Activated CD4-positive, alpha-beta T cell treated with anti-CD3 and anti-CD28 coated beads for 36 hours (primary cell): ENCODE measurements at regions of chr17 and their contacts with region 1.

Region 1: DNA sequence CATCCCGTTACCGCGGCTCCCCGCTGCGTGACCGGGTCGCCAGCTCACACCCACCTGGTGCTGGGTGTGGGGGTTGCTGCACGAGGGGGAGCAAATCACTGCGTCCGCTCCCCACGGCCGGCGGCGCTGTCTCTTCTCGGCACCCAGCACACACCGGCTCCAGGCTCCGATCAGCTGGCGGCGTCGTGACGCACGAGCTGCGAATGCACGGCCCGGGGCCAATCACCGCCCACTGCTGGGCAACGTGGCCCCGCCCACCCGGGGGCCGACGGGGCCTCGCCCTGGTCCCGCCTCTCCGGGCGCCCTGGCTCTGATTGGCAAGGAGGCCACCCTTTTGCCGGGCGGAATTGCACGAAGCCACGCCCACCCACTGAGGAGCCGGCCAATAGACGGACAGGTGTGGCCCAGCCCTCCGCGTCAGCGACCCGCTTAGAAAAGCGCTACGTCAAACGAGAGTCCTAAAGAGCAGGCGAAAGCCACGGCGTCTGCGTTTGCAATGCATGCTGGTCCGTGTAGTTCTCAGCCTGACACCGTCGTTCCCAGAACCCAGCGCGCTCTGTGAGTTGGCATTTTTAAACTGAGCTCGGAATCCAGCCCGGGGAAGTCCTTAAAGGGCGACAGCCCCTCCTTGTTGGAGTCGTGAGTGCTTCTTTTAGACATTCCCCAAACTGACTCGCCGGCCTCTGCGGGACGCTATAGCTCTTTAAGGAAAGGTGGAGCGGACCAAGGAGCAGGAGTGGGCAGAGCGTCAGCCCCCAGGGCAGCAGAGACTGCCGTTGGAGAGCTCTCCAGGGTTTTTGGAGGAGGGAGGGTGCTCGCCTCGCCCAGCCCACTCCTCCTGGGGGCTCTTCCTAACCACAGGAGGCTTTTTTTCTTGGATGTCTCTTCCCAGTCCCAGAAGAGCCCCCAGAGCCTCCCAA is 6.2 kb upstream of the TLCD2 start:
- DNase-seq: peak; percentile 100
- ATAC-seq: peak; percentile 89
- H3K4me3 Mint-ChIP-seq: peak overlapping the region; percentile 86
- H3K27ac Mint-ChIP-seq: peak overlapping the region; percentile 97
- H3K4me1 Mint-ChIP-seq: peaks cover 23% of the 10 kb centered on the region
- H3K27me3 Mint-ChIP-seq: peaks cover 4% of the 10 kb centered on the region

Region 2: GRCh38 chr17:996554-997344 is 719.6 kb before region 1 on chr17 and contains the start of gene TIMM22:
- CTCF ChIA-PET with region 1: no interaction called
- POLR2A ChIA-PET with region 1: no interaction called
- intact Hi-C with region 1: loop called in 1 of 2 experiments (anchors 2 kb)
- DNase-seq: peak; percentile 96
- ATAC-seq: peak; percentile 97
- H3K4me3 Mint-ChIP-seq: peak within 1 kb of the TSS; percentile 86
- H3K27ac Mint-ChIP-seq: peak within 1 kb of the TSS; percentile 96
- H3K4me1 Mint-ChIP-seq: peaks cover 20% of the 10 kb centered on the region
- H3K27me3 Mint-ChIP-seq: no peaks in the 10 kb centered on the region
- total RNA-seq, gene TIMM22: 9.4 to 9.8 TPM

Region 3: DNA sequence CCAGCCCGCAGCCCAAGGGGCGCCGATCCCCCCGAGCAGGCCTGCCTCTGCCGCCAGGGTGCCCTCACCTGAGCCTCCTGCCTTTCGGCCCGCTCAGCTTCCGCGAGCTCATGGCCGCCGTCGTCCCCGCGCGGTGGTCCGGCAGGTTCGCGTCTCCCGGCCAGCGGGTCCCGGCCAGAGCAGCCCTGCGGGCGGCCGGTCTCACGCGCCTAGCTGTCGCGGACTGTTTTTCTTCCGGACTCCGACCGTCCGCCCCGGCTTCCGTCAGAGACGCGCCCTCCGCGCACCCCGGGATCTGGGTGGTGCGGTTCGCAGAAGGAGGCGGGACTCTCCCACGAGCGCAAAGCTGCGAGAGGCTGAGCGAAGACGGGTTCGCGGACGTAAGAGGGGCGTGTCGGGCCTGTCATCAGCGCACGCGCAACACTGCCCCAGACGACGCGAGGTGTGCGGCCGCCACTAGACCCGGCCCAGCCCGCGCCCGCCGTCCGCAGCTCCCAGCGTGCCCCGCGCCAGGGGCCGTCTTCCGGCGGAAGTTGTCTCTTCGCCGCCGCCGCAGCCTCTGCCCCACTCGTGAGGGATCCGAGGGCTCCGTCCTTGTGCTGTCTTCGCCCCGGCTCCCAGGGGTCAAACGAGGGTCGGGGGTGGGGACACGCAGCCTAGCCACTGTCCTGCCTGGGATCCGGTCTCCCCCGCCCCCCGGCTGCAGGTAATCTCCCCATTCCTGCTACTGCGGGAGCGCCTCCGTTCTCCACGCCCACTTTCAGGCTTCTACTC is 199.8 kb before region 1 on chr17 and contains the start of gene INPP5K:
- CTCF ChIA-PET with region 1: no interaction called
- POLR2A ChIA-PET with region 1: no interaction called
- intact Hi-C with region 1: loop called in 1 of 2 experiments (anchors 1 kb)
- DNase-seq: peak; percentile 99
- ATAC-seq: peak; percentile 99
- H3K4me3 Mint-ChIP-seq: peak within 1 kb of the TSS; percentile 85
- H3K27ac Mint-ChIP-seq: peak within 1 kb of the TSS; percentile 81
- H3K4me1 Mint-ChIP-seq: peaks cover 28% of the 10 kb centered on the region
- H3K27me3 Mint-ChIP-seq: no peaks in the 10 kb centered on the region
- total RNA-seq, gene INPP5K: 18.5 to 27.3 TPM

Region 4: DNA sequence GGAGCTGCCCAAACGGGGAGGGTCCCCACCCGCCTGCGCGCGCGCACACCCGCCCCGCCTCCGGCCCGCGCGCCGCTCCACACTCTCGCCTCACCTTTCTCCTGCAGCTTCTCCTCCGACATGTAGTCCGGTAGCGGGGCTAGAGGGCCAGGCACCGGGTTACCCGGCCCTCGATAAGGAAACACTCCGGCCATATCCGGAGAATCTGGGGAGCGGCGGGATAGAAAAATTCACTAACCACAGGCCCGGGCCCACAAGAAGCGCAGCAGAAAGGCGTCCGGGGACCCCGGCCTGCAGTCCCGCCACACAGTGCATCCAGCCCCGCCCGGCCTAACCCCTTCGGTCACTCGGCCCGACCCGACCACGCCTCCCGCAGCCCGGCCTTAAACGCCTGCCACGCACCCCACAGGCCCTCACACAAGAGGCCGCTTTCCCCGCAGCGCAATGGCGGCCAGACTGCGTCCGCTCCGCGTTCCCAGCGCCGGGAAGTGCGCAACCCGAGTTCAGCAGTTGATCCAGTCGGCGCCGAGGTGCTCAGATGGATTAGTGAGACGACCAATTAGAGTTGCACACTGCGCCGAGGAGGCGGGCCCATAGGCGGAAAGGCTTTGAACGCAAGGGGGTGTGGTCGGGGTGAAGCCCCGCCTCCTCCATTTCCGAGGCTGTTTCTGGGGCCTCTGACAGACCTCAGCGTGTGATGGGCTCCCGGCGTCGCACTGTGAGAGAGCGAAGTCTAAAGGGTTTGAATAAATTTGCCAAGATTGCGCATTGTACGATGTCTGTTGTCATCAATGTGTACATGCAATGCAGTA is 31.8 kb before region 1 on chr17 and contains the start of gene PRPF8:
- CTCF ChIA-PET with region 1: interaction called, 9 read pairs
- POLR2A ChIA-PET with region 1: interaction called, 5 read pairs
- intact Hi-C with region 1: loop called (anchors 1 kb)
- DNase-seq: peak; percentile 99
- ATAC-seq: peak; percentile 100
- H3K4me3 Mint-ChIP-seq: peak within 1 kb of the TSS; percentile 98
- H3K27ac Mint-ChIP-seq: peak within 1 kb of the TSS; percentile 93
- H3K4me1 Mint-ChIP-seq: peaks cover 34% of the 10 kb centered on the region
- H3K27me3 Mint-ChIP-seq: no peaks in the 10 kb centered on the region
- total RNA-seq, gene PRPF8: 391 to 425 TPM

Region 5: GRCh38 chr17:2029911-2030778 is 313.8 kb after region 1 on chr17 and contains the start of gene DPH1:
- CTCF ChIA-PET with region 1: interaction called, 5 read pairs
- POLR2A ChIA-PET with region 1: interaction called, 4 read pairs
- intact Hi-C with region 1: loop called (anchors 1 to 5 kb)
- DNase-seq: peak; percentile 94
- ATAC-seq: peak; percentile 91
- H3K4me3 Mint-ChIP-seq: peak within 1 kb of the TSS; percentile 88
- H3K27ac Mint-ChIP-seq: peak within 1 kb of the TSS; percentile 78
- H3K4me1 Mint-ChIP-seq: peaks cover 24% of the 10 kb centered on the region
- H3K27me3 Mint-ChIP-seq: peaks cover 20% of the 10 kb centered on the region
- total RNA-seq, gene DPH1: 29.1 to 37.0 TPM

Region 6: DNA sequence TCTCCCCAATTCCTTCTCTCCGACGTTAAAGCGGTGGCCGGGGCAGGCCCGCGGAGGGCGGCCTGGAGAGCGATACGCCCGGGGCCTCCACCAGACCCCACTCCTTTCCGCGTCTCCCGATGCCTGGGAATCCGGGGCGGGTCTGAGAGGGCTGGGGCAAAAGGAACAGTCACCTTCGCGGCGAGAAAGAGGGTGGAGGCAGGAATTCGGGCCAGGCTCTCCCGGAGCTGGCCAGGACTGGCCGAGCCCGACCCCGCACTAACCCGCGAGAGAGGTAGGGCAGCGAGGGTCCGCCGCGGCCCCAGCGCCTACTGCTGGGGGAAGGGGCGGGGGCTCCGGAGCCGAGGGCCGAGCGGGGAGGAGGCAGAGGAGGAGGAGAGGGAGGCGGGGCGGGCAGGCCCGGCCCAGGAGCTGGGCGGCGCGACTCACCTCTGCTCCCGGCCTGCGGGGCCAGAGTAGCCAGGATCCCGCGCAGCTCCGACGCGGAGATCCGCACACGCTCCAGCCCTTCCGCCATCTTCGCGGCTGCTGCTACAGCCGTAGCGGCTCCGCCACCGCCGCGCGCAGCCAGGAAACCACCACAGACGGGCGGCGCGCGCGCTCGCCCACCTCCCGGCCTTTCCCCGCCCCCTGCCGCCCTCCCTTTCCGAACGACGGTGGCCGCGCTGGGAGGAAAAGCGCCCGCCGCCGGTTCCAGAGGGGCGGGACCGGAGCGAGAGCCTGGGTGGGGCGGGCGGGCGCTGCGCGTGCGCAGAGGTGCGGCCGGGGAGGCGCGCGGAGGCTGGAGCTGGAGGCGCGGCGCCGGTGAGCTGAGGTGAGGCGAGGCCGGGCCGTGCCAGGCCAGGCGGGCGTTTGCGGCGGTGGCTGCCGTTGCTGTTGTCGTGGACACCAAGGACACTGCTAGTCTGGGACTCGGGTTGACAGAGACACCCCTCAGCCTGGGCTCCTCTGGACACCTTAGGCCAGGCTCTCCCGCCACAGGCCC is 587.2 kb after region 1 on chr17 and contains the starts of genes SMG6 and SRR:
- CTCF ChIA-PET with region 1: no interaction called
- POLR2A ChIA-PET with region 1: no interaction called
- intact Hi-C with region 1: loop called in 1 of 2 experiments (anchors 1 kb)
- DNase-seq: peak; percentile 98
- ATAC-seq: peak; percentile 89
- H3K4me3 Mint-ChIP-seq: peak within 1 kb of the TSS; percentile 81
- H3K27ac Mint-ChIP-seq: peak within 1 kb of the TSS; percentile 61
- H3K4me1 Mint-ChIP-seq: peaks cover 46% of the 10 kb centered on the region
- H3K27me3 Mint-ChIP-seq: no peaks in the 10 kb centered on the region
- total RNA-seq, gene SMG6: 28.5 to 31.4 TPM
- total RNA-seq, gene SRR: 15.4 to 18.3 TPM